ENCODE measurements at regions of chr6 and their contacts with region 1.

Region 1: DNA sequence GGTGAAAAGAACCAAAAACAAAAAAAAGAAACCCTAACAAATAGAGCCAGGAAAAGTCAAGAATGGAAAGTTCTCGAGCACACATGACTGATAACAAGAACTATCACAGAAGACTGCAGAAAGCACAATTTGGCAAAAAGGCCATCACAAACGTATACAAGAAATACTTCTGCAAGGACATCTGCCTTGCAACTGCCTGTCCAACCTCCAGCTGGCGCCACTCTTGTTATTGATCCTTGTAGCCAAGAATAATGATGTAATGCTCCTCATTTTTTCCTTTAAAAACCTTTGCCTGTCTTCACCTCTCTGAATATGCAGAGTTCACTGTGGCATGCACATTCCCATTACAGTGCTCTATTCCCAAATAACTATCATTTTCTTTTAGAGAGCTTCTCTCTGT is 87.9 kb upstream of the BMP5 start:
- DNase-seq: no peak
- ATAC-seq: no peak
- H3K4me3 Mint-ChIP-seq: no peak overlapping the region
- H3K27ac Mint-ChIP-seq: no peak overlapping the region
- H3K4me1 Mint-ChIP-seq: no peaks in the 10 kb centered on the region
- H3K27me3 Mint-ChIP-seq: no peaks in the 10 kb centered on the region

Region 2: GRCh38 chr6:55319961-55320695 is 643.2 kb before region 1 on chr6:
- CTCF ChIA-PET with region 1: no interaction called
- POLR2A ChIA-PET with region 1: no interaction called
- intact Hi-C with region 1: no loop called
- DNase-seq: no peak
- ATAC-seq: no peak
- H3K4me3 Mint-ChIP-seq: no peak overlapping the region
- H3K27ac Mint-ChIP-seq: no peak overlapping the region
- H3K4me1 Mint-ChIP-seq: no peaks in the 10 kb centered on the region
- H3K27me3 Mint-ChIP-seq: no peaks in the 10 kb centered on the region

Region 3: GRCh38 chr6:56046576-56046975 is 83.3 kb after region 1 on chr6:
- CTCF ChIA-PET with region 1: no interaction called
- POLR2A ChIA-PET with region 1: no interaction called
- intact Hi-C with region 1: loop called (anchors 1 to 2 kb)
- DNase-seq: no peak
- ATAC-seq: no peak
- H3K4me3 Mint-ChIP-seq: no peak overlapping the region
- H3K27ac Mint-ChIP-seq: no peak overlapping the region
- H3K4me1 Mint-ChIP-seq: no peaks in the 10 kb centered on the region
- H3K27me3 Mint-ChIP-seq: no peaks in the 10 kb centered on the region